ENCODE measurements at regions of chr3 and their contacts with region 1.

Region 1: GRCh38 chr3:49955636-49956035 is 15.7 kb downstream of the RBM6 start:
- DNase-seq: no peak
- ATAC-seq: no peak
- H3K4me3 Mint-ChIP-seq: no peak overlapping the region
- H3K27ac Mint-ChIP-seq: no peak overlapping the region
- H3K4me1 Mint-ChIP-seq: peaks cover 25% of the 10 kb centered on the region
- H3K27me3 Mint-ChIP-seq: no peaks in the 10 kb centered on the region

Region 2: GRCh38 chr3:49626101-49626581 is 329.5 kb before region 1 on chr3:
- CTCF ChIA-PET with region 1: no interaction called
- POLR2A ChIA-PET with region 1: no interaction called
- intact Hi-C with region 1: no loop called
- DNase-seq: peak; percentile 16
- ATAC-seq: peak; percentile 53
- H3K4me3 Mint-ChIP-seq: no peak overlapping the region
- H3K27ac Mint-ChIP-seq: no peak overlapping the region
- H3K4me1 Mint-ChIP-seq: peaks cover 5% of the 10 kb centered on the region
- H3K27me3 Mint-ChIP-seq: peaks cover 6% of the 10 kb centered on the region

Region 3: GRCh38 chr3:49996016-49996415 is 40.4 kb after region 1 on chr3:
- CTCF ChIA-PET with region 1: no interaction called
- POLR2A ChIA-PET with region 1: interaction called, 13 read pairs
- intact Hi-C with region 1: no loop called
- DNase-seq: no peak
- ATAC-seq: no peak
- H3K4me3 Mint-ChIP-seq: no peak overlapping the region
- H3K27ac Mint-ChIP-seq: no peak overlapping the region
- H3K4me1 Mint-ChIP-seq: peaks cover 16% of the 10 kb centered on the region
- H3K27me3 Mint-ChIP-seq: no peaks in the 10 kb centered on the region

Region 4: GRCh38 chr3:50350527-50351322 is 395.1 kb after region 1 on chr3 and contains the starts of genes CYB561D2 and NPRL2:
- CTCF ChIA-PET with region 1: no interaction called
- POLR2A ChIA-PET with region 1: interaction called, 11 read pairs
- intact Hi-C with region 1: no loop called
- DNase-seq: peak; percentile 99
- ATAC-seq: peak; percentile 90
- H3K4me3 Mint-ChIP-seq: peak within 1 kb of the TSS; percentile 90
- H3K27ac Mint-ChIP-seq: peak within 1 kb of the TSS; percentile 97
- H3K4me1 Mint-ChIP-seq: peaks cover 55% of the 10 kb centered on the region
- H3K27me3 Mint-ChIP-seq: no peaks in the 10 kb centered on the region
- total RNA-seq, gene CYB561D2: 10.3 to 14.3 TPM
- total RNA-seq, gene NPRL2: 42.5 to 43.0 TPM

Measured in activated CD4-positive, alpha-beta T cell treated with anti-CD3 and anti-CD28 coated beads for 36 hours (primary cell).